Spleen (tissue), 13 donors: ENCODE measurements at regions of chr9 and their contacts with region 1.

Region 1: DNA sequence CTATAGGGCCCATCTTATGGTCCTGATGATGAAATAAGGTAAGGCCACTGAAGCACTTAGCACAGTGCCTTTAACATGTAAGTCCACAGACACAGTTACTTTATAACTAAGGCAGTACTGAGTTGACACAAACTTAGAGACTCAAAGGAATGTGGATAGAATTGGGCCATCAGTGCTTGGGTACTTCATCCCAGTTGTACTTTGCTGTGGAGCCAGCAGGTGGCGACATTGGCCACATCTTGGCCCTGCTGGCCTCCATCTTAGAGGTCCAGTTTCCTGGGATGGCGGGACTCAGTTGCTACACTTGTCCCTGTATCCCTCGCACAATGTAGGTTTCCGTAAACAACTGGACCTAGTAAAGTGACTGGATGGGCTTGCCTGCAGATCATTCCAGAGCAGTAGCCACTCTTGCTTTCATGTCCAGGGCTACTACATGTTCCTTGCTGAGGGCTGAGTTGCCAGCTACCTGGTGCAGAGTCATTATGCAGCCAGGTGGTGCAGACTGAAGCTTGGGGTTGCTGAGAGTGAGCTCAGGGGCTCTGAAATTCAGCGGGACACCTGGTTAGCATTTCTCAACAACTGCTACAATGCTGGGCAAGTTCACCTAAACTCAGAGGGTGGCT is 10.6 kb downstream of the MTAP start:
- DNase-seq: peak; percentile 90
- H3K4me3 ChIP-seq: peak overlapping the region in 1 of 8 donors; percentile 21
- H3K27ac ChIP-seq: peak overlapping the region in 5 of 8 donors; percentile 9 to 41 (median 14)
- H3K4me1 ChIP-seq: peaks cover 4 to 52% (median 26%) of the 10 kb centered on the region in 6 donors
- H3K27me3 ChIP-seq: no peaks in the 10 kb centered on the region
- CTCF ChIP-seq: peak; percentile 83 to 94 (median 91)
- POLR2A ChIP-seq: no peak

Region 2: DNA sequence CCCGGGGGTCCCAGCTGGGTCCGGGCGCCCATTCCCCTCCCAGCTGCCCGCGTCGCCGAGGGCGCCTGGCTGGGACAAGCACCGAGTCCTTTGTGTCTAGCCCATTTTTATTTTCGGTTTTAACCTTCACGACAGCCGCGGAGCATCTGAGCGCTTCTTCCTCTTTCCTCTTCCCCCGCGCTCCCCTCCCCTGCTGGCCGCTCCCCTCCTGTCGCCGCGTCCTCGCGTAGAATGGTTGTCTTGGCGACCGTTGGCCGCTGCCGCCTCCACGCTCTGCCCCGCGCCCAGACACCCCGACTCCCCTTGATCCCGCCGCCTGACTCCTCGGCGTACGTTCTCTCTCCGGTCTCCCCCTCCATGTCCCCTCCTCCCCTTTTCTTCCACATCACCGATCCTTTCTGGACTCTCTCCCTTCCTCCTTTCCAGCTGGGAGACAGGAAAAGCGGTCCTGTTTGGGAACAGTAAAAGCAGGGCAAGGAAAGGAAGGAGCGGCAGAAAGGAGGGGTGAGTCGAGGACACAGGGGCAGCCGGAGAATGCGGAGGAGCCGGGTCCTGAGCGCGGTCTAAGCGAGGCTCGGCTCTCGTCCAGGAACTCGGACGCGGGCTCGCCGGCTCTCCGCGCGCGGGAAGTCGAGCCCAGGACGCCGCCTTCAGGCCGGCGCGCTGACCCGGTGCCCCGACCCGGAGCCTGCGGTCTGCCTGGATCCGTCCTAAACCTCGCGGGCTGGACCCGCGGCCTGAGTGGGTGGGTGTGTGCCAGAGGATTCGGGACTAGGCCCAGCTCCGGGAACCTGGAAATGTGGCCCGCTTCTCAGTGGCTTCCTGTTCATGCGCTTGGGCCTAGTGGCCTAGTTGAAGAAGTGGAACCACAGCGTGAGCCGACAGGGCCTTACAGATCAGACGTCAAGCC is 182.4 kb after region 1 on chr9:
- intact Hi-C with region 1: loop called (anchors 5 kb)
- DNase-seq: peak; percentile 98
- H3K4me3 ChIP-seq: peak overlapping the region; percentile 39 to 92 (median 83)
- H3K27ac ChIP-seq: peak overlapping the region; percentile 54 to 97 (median 94)
- H3K4me1 ChIP-seq: peaks cover 7 to 48% (median 24%) of the 10 kb centered on the region in 6 donors
- H3K27me3 ChIP-seq: peaks cover 0 to 31% (median 2%) of the 10 kb centered on the region in 7 donors
- CTCF ChIP-seq: peak in 7 of 11 experiments; percentile 6 to 24 (median 15)
- POLR2A ChIP-seq: no peak

Region 3: GRCh38 chr9:22037954-22038690 is 225.1 kb after region 1 on chr9:
- intact Hi-C with region 1: loop called (anchors 10 kb)
- DNase-seq: no peak
- H3K4me3 ChIP-seq: no peak overlapping the region
- H3K27ac ChIP-seq: peak overlapping the region in 2 of 8 donors; percentile 8 to 14
- H3K4me1 ChIP-seq: peaks cover 0 to 26% (median 10%) of the 10 kb centered on the region in 6 donors
- H3K27me3 ChIP-seq: no peaks in the 10 kb centered on the region
- CTCF ChIP-seq: peak in 10 of 11 experiments; percentile 24 to 64 (median 48)
- POLR2A ChIP-seq: no peak

Region 4: DNA sequence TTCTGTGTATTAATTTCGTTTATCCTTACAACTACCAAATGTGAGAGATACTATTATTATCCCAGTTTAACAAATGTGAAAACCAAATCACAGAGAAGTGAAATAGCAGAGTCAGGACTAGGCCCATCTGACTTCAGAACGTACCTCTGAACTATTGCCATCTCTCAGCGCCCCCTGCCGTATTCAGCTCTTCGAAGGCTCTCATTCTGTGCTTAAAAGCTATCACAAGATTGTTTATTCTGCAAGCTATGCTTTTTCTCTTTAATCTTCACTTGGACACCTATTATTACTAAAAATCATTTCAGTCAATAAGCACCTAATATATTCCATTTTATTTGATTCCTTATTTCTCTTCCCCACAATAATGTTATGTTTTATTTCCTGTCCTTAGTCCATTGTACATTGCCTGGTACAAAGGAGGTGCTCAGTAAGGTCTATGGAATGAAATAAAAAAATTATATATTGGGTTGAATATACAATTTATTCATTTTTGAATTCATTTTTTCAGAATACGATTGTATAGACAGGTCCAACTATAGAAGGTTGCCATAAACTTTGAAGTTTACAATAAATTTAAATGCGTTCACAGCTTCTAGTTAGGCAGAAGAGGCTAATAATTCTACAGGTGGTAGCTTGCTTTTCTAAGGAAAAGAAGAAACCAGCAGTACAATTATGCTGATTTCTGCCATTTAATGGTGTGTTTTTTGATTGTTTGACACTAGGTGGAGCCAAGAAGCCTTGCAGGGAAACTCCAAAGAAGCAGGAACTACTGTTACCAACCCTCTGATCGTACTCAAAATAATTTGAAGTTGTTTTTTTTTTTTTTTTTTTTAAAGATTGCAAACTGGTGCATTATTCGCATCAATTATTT is 431.3 kb after region 1 on chr9:
- intact Hi-C with region 1: loop called (anchors 5 kb)
- DNase-seq: peak; percentile 71
- H3K4me3 ChIP-seq: peak overlapping the region in 3 of 8 donors; percentile 3 to 25 (median 14)
- H3K27ac ChIP-seq: no peak overlapping the region
- H3K4me1 ChIP-seq: peaks cover 11 to 40% (median 17%) of the 10 kb centered on the region in 6 donors
- H3K27me3 ChIP-seq: no peaks in the 10 kb centered on the region
- CTCF ChIP-seq: peak in 5 of 11 experiments; percentile 30 to 45 (median 37)
- POLR2A ChIP-seq: no peak

Region 5: DNA sequence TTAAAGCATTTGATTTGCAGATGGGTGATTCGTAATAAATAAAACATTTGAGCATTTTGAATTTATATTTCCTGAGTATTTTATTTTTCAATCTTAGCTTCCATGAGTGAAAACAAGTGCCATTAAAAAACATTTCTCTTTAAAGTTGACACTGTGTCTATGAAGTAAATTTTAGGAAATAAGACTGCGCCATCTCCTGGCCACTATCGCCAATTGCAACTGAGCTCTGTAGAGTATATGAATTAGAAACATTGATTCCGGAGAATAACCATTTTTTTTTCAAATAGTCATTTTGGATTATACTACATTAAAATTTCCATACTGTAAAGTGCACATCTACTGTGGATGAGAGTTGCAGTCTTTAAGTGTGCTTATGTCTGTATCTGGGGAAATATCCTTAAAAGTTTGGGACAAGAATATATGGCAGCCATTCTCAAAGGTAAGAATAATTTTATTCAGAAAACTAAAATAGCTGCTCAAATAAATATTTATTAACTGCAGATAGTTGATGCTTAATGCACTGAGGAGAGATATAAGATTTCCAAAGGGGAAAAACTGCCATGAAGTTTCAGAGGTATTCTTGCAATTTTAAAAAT is 639.5 kb after region 1 on chr9:
- intact Hi-C with region 1: loop called (anchors 10 kb)
- DNase-seq: peak; percentile 51
- H3K4me3 ChIP-seq: no peak overlapping the region
- H3K27ac ChIP-seq: no peak overlapping the region
- H3K4me1 ChIP-seq: peaks cover 0 to 12% (median 3%) of the 10 kb centered on the region in 6 donors
- H3K27me3 ChIP-seq: peaks cover 0 to 40% (median 2%) of the 10 kb centered on the region in 7 donors
- CTCF ChIP-seq: peak; percentile 37 to 86 (median 77)
- POLR2A ChIP-seq: no peak